HEK293T (cell line): ENCODE measurements at regions of chr5 and their contacts with region 1.

Region 1: GRCh38 chr5:96752341-96753016 is 55.3 kb downstream of the ERAP1 start:
- DNase-seq: peak; percentile 40

Region 2: DNA sequence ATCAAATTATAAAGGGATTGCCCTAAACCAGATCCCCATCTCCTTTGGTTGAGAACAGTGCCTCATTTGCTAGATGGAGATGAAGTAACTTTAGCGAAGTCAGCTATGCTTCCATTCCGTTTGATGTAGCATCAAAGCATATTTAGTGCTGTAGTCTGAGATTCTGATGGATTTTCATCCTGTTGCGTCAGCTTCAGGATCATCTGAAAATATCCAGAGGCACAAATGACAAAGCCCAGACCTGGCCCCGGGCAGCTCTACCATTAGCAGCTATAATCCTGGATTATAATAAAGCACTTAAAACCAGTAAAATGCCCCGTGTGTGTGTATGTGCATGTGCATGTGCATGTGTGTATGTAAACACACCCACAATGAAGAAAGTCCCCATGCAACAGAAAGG is 10.5 kb after region 1 on chr5:
- CTCF ChIA-PET with region 1: interaction called, 11 read pairs
- POLR2A ChIA-PET with region 1: no interaction called
- DNase-seq: no peak

Region 3: GRCh38 chr5:96868603-96869371 is 116.3 kb after region 1 on chr5:
- CTCF ChIA-PET with region 1: interaction called, 19 read pairs
- POLR2A ChIA-PET with region 1: no interaction called
- DNase-seq: peak; percentile 70